ENCODE measurements at regions of chr12 and their contacts with region 1.

Region 1: DNA sequence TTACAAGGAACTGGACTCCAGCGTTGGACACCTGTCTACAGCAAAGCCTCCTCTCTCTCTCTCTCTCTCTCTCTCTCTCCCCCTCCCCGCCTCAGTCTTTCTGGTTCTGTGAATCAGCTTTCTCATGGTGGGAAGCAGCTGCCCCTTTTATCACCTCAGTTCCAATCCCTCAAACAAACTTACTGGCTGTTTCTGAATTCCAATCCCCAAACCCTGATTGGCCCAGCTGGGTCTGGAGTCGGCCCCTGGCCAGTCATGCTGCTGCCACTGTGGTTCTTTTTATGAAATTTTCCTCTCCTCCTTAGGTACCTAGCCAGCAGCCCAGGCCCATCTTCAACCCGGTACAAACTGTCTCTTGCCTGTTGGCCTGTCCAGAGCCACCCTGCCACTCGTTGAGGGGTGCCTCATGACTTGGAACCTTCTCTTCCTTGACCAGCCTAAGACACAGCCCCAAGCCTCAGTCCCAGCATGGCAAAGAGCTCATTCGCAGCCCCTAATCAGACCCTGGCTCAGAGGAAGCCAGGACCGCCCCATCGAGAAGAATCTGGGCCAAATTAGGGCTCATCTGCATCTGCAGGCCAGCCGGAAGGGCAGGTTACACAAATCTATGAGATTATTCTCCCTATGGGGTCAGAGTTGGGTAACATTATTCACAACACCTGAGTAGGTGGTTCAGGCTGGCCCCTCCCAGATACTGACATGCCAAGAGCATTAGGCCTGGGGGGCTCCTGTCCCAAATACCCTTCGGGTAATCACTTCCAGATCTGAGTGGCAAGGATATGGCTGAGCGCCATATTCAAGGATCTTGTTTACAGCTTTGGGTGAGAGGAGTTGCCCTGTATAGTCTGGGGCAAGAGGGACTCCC is 9.5 kb upstream of the MORN3 start:
- DNase-seq: no peak
- ATAC-seq: peak; percentile 13 to 21; a peak in 3 of 6 replicates
- H3K4me3 ChIP-seq: no peak overlapping the region
- H3K27ac ChIP-seq: no peak overlapping the region
- H3K4me1 ChIP-seq: no peaks in the 10 kb centered on the region
- CTCF ChIP-seq: no peak
- EP300 ChIP-seq: no peak
- POLR2A ChIP-seq: no peak
- RAD21 ChIP-seq: no peak

Region 2: GRCh38 chr12:121560392-121561008 is 118.4 kb before region 1 on chr12:
- CTCF ChIA-PET with region 1: interaction called, 10 read pairs
- POLR2A ChIA-PET with region 1: no interaction called
- DNase-seq: no peak
- ATAC-seq: peak in 1 of 2 experiments; percentile 37; a peak in 4 of 6 replicates
- H3K4me3 ChIP-seq: no peak overlapping the region
- H3K27ac ChIP-seq: no peak overlapping the region
- H3K4me1 ChIP-seq: no peaks in the 10 kb centered on the region
- CTCF ChIP-seq: no peak
- EP300 ChIP-seq: no peak
- POLR2A ChIP-seq: no peak
- RAD21 ChIP-seq: no peak

Measured in A549 (cell line).